PC-9 (cell line): ENCODE measurements at regions of chr4 and their contacts with region 1.

Region 1: GRCh38 chr4:107736924-107737448 is 17.0 kb upstream of the PAPSS1 start:
- DNase-seq: no peak
- H3K4me3 ChIP-seq: no peak overlapping the region
- H3K27ac ChIP-seq: no peak overlapping the region
- H3K4me1 ChIP-seq: no peaks in the 10 kb centered on the region
- H3K27me3 ChIP-seq: no peaks in the 10 kb centered on the region
- CTCF ChIP-seq: peak; percentile 82

Region 2: GRCh38 chr4:107719922-107720722 is 16.9 kb before region 1 on chr4 and contains the start of gene PAPSS1:
- CTCF ChIA-PET with region 1: no interaction called
- POLR2A ChIA-PET with region 1: interaction called, 10 read pairs
- intact Hi-C with region 1: no loop called
- DNase-seq: peak; percentile 86 to 93
- H3K4me3 ChIP-seq: peak within 1 kb of the TSS; percentile 82
- H3K27ac ChIP-seq: peak within 1 kb of the TSS; percentile 74
- H3K4me1 ChIP-seq: peaks cover 10% of the 10 kb centered on the region
- H3K27me3 ChIP-seq: no peaks in the 10 kb centered on the region
- CTCF ChIP-seq: no peak
- total RNA-seq, gene PAPSS1: 18.8 and 26.8 TPM in 2 replicates

Region 3: GRCh38 chr4:107863850-107864371 is 126.9 kb after region 1 on chr4:
- CTCF ChIA-PET with region 1: interaction called, 11 read pairs
- POLR2A ChIA-PET with region 1: no interaction called
- intact Hi-C with region 1: no loop called
- DNase-seq: peak; percentile 48 to 50
- H3K4me3 ChIP-seq: no peak overlapping the region
- H3K27ac ChIP-seq: peak overlapping the region; percentile 32
- H3K4me1 ChIP-seq: peaks cover 21% of the 10 kb centered on the region
- H3K27me3 ChIP-seq: no peaks in the 10 kb centered on the region
- CTCF ChIP-seq: no peak